Activated CD4-positive, alpha-beta T cell treated with anti-CD3 and anti-CD28 coated beads for 36 hours (primary cell): ENCODE measurements at regions of chr5 and their contacts with region 1.

Region 1: GRCh38 chr5:132820162-132820754 is 7.2 kb downstream of the SOWAHA start:
- DNase-seq: peak; percentile 96
- ATAC-seq: peak; percentile 86
- H3K4me3 Mint-ChIP-seq: no peak overlapping the region
- H3K27ac Mint-ChIP-seq: no peak overlapping the region
- H3K4me1 Mint-ChIP-seq: peaks cover 12% of the 10 kb centered on the region
- H3K27me3 Mint-ChIP-seq: peaks cover 30% of the 10 kb centered on the region

Region 2: DNA sequence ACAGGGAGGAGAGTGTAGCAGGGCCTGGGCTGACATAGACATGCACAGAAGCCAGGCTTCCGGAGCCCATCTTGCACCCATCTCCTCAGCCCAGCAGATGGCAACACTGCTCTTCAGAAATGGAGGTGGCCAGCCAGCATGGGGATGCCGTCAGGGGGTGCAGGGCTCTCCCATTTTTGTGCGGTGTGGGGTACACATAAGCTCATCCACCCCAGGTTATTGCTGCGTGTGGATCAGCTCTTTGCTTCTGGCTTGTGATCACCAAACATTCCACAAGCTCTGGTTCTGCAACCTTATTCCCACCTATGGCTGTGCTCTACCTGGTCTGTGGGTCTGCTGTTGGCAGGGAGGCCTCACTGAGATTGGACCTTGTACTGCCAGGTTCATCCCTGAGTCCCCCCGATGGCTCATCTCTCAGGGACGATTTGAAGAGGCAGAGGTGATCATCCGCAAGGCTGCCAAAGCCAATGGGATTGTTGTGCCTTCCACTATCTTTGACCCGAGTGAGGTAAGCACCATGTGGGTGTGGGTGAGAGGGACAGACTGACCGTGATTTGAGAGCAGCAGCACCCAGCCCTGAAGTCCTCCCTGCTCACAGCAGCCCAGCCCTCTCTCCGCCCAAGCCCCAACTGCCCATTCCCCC is 433.5 kb before region 1 on chr5:
- CTCF ChIA-PET with region 1: interaction called, 6 read pairs
- POLR2A ChIA-PET with region 1: no interaction called
- intact Hi-C with region 1: loop called (anchors 1 to 5 kb)
- DNase-seq: peak; percentile 88
- ATAC-seq: peak; percentile 87
- H3K4me3 Mint-ChIP-seq: no peak overlapping the region
- H3K27ac Mint-ChIP-seq: peak overlapping the region; percentile 29
- H3K4me1 Mint-ChIP-seq: peaks cover 40% of the 10 kb centered on the region
- H3K27me3 Mint-ChIP-seq: no peaks in the 10 kb centered on the region

Region 3: GRCh38 chr5:132506094-132506692 is 314.1 kb before region 1 on chr5:
- CTCF ChIA-PET with region 1: interaction called, 9 read pairs
- POLR2A ChIA-PET with region 1: interaction called, 5 read pairs
- intact Hi-C with region 1: loop called (anchors 1 to 5 kb)
- DNase-seq: peak; percentile 43
- ATAC-seq: peak; percentile 62
- H3K4me3 Mint-ChIP-seq: no peak overlapping the region
- H3K27ac Mint-ChIP-seq: no peak overlapping the region
- H3K4me1 Mint-ChIP-seq: no peaks in the 10 kb centered on the region
- H3K27me3 Mint-ChIP-seq: peaks cover 23% of the 10 kb centered on the region

Region 4: DNA sequence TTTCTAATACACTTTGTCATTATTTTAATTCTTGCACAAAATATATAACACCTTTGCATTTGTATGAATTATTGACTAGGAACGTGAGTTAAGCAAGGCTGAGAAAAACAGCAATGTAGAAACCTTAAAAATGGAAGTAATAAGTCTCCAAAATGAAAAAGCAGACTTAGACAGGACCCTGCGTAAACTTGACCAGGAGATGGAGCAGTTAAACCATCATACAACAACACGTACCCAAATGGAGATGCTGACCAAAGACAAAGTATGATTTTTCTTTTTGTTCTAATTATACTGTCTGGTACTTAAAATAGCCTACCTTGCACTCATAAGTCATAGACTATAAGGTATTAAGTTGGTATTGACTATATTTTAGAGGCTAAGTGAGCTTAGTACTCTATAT is 229.1 kb before region 1 on chr5:
- CTCF ChIA-PET with region 1: interaction called, 7 read pairs
- POLR2A ChIA-PET with region 1: no interaction called
- intact Hi-C with region 1: loop called in 1 of 2 experiments (anchors 1 kb)
- DNase-seq: no peak
- ATAC-seq: no peak
- H3K4me3 Mint-ChIP-seq: no peak overlapping the region
- H3K27ac Mint-ChIP-seq: no peak overlapping the region
- H3K4me1 Mint-ChIP-seq: peaks cover under 1% of the 10 kb centered on the region
- H3K27me3 Mint-ChIP-seq: no peaks in the 10 kb centered on the region

Region 5: DNA sequence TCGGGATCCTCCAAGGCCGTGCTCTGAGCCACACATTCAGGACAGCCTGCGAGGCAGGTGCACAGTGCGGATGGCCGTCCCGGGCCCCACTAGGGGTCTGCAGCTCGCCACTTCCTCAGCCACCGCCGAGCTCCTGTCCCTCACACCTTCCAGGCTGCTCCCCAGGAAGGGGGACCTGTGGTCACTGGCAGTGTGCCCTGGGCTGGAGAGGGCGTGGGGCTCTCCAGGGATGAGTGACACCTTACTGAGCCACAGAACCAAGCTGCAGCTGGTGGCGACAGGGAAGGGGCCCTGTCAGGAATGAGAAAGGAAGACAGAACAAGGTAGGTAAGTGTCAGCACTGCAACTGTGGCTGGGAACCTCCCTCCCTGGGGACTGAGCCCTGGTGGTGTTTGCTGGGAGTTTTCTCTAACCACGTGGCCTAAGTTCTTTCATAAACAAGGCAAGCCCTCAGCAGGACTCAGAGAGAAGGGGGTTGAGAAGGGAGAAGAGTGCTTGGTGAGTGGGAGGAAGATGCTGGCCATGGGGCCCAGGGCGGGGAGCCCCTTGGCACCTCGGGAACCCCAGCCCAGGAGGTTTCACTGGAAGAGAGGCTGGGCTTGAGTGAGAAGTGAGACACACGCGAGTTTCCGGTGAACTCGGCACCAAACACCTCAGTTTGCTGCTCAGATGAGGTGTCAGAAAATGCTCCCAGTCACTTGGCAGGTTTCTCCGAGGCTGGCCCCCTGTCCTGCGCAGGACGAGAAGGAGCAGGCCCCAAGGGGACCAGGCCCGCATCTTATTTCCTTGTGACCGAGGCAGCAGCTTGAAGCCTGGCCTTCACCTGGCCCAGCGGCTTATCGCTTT is 157.1 kb before region 1 on chr5:
- CTCF ChIA-PET with region 1: interaction called, 4 read pairs
- POLR2A ChIA-PET with region 1: no interaction called
- intact Hi-C with region 1: loop called in 1 of 2 experiments (anchors 1 kb)
- DNase-seq: peak; percentile 78
- ATAC-seq: peak; percentile 81
- H3K4me3 Mint-ChIP-seq: no peak overlapping the region
- H3K27ac Mint-ChIP-seq: peak overlapping the region; percentile 87
- H3K4me1 Mint-ChIP-seq: peaks cover 35% of the 10 kb centered on the region
- H3K27me3 Mint-ChIP-seq: peaks cover under 1% of the 10 kb centered on the region

Region 6: DNA sequence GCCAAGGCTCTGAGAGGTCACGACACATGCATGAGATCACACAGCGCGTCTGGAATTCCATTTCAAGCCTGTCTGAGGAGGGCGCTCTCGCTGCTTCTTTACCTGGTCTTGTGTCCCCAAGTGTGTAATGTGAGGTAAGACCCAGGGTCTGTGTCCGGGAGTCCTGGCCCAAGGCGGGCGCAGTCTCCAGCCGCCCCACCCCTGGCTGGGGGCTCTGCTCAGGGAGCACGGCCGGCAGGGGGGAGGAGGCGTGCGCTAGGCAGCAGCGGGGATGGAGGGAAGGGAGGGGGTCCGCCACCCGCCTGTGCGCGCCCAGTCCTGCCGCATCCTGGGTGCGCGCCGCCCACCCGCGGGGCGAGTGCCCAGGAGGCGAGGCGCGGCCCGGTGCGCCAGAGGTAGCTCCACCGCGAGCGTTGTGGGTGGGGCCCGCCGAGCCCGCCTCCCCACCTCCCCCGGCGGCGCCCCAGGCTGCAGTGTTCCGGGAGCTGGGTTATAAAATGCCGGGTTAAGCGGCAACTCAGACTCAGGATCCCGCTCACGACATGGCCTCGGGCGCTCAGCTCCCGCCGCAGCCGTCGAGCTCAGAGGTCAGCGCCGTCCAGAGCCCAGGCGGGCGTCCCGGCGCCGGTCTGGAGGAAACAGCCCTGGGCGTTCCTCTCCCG is 73.2 kb before region 1 on chr5 and contains the start of gene CCNI2:
- CTCF ChIA-PET with region 1: interaction called, 10 read pairs
- POLR2A ChIA-PET with region 1: no interaction called
- intact Hi-C with region 1: loop called (anchors 2 kb)
- DNase-seq: peak; percentile 77
- ATAC-seq: peak; percentile 73
- H3K4me3 Mint-ChIP-seq: peak within 1 kb of the TSS; percentile 68
- H3K27ac Mint-ChIP-seq: no peak within 1 kb of the TSS
- H3K4me1 Mint-ChIP-seq: peaks cover 20% of the 10 kb centered on the region
- H3K27me3 Mint-ChIP-seq: no peaks in the 10 kb centered on the region
- total RNA-seq, gene CCNI2: 4.3 to 4.6 TPM

Region 7: DNA sequence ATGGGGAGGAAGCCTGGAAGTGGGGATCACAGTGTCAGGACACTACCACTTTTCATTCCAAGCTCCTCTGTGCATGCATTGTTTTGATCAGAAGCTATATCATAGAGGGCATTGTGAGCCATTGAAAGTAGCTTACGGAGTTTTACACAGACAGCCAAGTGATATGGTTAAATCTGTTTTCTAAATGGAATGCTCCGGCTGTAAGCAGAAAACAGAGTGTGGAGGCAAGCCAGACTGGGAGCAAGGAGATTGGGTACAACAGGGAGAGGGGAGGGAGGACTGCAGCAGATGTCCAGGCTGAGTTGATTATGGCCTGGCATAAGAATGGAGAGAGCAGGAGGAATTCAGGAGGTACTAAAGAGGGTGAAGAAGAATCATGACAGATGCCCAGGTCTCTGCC is 22.6 kb before region 1 on chr5:
- CTCF ChIA-PET with region 1: interaction called, 13 read pairs
- POLR2A ChIA-PET with region 1: no interaction called
- intact Hi-C with region 1: no loop called
- DNase-seq: no peak
- ATAC-seq: no peak
- H3K4me3 Mint-ChIP-seq: no peak overlapping the region
- H3K27ac Mint-ChIP-seq: no peak overlapping the region
- H3K4me1 Mint-ChIP-seq: no peaks in the 10 kb centered on the region
- H3K27me3 Mint-ChIP-seq: peaks cover 28% of the 10 kb centered on the region

Region 8: DNA sequence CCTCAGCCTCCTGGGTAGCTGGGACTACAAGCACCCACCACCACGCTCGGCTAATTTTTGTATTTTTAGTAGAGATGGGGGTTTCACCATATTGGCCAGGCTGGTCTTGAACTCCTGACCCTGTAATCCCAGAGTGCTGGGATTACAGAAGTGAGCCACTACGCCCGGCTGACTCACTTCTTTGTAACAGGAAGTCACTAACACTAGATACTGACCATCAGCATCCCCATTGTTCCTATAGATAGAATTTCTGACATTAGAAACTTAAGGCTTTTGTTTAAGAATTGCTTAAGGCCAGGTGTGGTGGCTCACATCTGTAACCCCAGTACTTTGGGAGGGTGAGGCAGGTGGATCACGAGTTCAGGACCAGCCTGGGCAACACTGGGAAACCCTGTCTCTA is 95.4 kb after region 1 on chr5:
- CTCF ChIA-PET with region 1: no interaction called
- POLR2A ChIA-PET with region 1: no interaction called
- intact Hi-C with region 1: no loop called
- DNase-seq: no peak
- ATAC-seq: no peak
- H3K4me3 Mint-ChIP-seq: no peak overlapping the region
- H3K27ac Mint-ChIP-seq: no peak overlapping the region
- H3K4me1 Mint-ChIP-seq: no peaks in the 10 kb centered on the region
- H3K27me3 Mint-ChIP-seq: no peaks in the 10 kb centered on the region

Region 9: DNA sequence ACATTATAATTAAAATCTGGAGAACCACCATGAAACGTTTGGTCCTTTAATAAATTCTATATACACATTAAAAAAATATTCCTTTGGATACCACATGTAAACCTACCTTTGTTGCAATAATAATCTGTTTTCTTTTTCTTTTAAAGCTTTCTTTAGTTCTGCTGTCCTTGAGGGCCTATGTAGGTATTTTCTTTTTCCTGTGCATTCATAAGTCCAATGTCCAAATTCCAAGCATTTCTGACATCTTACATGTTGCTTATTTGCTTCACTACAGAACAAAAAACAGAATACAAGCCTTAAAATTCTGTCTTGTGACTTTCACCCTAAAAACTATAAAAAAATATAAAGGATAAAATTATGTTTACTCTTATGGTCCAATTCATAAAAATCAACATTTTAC is 186.4 kb after region 1 on chr5:
- CTCF ChIA-PET with region 1: no interaction called
- POLR2A ChIA-PET with region 1: no interaction called
- intact Hi-C with region 1: no loop called
- DNase-seq: no peak
- ATAC-seq: no peak
- H3K4me3 Mint-ChIP-seq: no peak overlapping the region
- H3K27ac Mint-ChIP-seq: no peak overlapping the region
- H3K4me1 Mint-ChIP-seq: no peaks in the 10 kb centered on the region
- H3K27me3 Mint-ChIP-seq: no peaks in the 10 kb centered on the region